PC-9 (cell line): ENCODE measurements at regions of chr1 and their contacts with region 1.

Region 1: DNA sequence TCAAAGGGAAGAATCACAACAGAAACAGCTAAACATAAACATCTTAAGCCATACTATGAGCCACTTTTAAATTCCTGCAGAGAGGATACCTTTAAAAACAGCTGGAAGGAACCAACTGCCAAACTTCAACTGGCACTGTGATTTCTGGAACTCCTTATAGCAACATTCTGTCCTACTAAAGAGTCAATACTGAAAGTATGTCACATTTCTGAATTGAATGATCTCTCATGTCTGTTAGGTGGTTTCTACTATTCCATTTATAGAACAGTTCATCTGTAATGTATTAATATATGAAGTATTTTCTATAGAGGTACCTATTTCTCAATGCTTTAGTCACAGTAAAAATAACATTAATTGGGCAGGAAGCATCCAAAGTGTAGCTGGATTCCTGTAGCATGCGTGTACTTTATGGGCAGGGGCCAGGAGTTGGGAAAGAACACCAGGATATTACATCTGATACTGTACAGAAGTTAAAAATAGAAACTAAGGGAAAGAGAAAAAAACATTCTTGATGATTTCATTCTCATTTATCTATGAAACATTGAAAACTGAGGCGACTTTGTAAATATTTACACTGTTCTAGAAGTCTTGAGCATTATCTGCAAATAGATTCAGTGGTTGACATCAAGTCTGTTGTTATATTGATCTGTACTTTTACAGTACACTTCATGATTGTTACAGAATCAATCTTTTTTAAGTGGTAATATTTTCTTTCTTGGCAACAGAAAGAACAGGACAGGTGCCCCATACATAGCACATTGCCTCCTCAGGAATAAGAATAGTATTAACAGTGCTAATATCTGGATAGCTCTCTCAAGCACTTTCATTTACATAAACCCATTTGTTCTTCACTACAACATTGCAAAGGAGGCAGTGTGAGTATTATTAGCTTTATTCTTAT is 6.1 kb upstream of the ZNF281 start:
- DNase-seq: peak; percentile 67 to 96
- H3K4me3 ChIP-seq: peak overlapping the region; percentile 40; the same call in 1 of the 2 replicates
- H3K27ac ChIP-seq: peak overlapping the region; percentile 100
- H3K4me1 ChIP-seq: peaks cover 48% of the 10 kb centered on the region
- H3K27me3 ChIP-seq: no peaks in the 10 kb centered on the region
- CTCF ChIP-seq: no peak

Region 2: DNA sequence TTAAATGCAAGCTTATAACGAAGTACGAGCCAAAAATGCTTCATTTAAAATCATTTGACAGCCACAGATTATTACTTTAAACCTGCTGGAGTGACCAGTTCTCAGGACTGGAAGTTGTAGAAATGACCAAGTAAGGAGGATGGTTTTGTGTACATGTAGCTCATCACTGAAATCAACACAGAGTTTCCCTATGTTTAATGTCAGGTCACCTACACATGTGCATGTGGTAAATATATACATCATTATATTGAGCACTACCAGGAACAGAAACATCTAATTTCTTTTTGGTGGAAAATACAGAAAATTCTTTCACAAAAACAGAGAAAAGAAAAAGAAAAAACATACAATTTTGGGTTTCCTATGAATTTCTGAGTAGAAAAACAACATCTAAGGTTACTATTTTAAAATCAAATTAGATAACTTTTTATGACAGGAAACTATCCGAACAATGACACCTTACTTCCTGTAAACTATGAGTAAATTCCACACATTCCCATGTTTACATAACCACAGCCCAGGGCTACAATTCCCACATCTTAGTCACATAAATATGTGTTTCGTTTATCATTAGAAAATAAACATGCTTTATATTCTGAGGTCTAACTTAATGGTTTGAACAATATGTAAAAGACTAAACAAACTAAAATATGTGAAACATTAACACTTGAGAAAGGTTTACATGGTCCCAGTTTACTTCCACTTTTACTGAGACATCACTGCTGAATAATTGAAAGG is 79.7 kb before region 1 on chr1:
- CTCF ChIA-PET with region 1: no interaction called
- POLR2A ChIA-PET with region 1: no interaction called
- intact Hi-C with region 1: loop called (anchors 1 kb)
- DNase-seq: peak; percentile 26 to 92
- H3K4me3 ChIP-seq: peak overlapping the region; percentile 8; the same call in 1 of the 2 replicates
- H3K27ac ChIP-seq: peak overlapping the region; percentile 92
- H3K4me1 ChIP-seq: peaks cover 43% of the 10 kb centered on the region
- H3K27me3 ChIP-seq: no peaks in the 10 kb centered on the region
- CTCF ChIP-seq: no peak

Region 3: GRCh38 chr1:200400556-200400955 is 15.4 kb before region 1 on chr1:
- CTCF ChIA-PET with region 1: no interaction called
- POLR2A ChIA-PET with region 1: interaction called, 10 read pairs
- intact Hi-C with region 1: no loop called
- DNase-seq: no peak
- H3K4me3 ChIP-seq: no peak overlapping the region
- H3K27ac ChIP-seq: no peak overlapping the region
- H3K4me1 ChIP-seq: peaks cover 8% of the 10 kb centered on the region
- H3K27me3 ChIP-seq: no peaks in the 10 kb centered on the region
- CTCF ChIP-seq: no peak